ENCODE measurements at regions of chr6 and their contacts with region 1.

Region 1: DNA sequence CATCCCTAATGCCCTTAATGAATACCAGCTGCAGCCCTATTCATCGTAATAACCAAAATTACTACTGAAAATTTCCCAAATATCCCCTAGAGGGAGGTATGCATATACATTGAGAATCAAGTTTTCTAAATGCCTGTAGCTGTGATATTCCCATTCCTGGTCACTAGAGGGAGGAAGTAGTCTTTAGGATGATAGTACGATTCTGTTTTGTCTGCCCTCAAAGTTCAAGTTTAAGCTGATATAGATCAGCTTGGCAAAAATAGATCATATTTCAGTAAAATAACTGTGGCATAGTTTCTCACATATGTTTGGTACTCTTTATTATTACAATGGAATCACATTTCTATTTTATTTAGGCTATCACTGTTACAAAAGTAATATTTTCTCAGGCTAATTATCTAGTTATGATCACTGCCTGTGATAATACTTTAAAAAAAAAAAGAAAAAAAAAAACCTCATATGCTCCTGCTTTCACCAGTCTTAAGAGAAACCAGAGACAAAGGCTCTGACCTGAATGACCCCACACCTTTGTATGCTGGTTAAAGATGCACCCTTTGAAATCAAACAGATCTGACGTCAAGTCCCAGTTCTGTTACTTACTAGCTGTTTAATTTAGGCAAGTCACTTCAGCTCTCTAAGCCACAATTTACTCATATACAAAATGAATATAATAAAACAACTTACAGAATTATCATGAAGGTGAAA is 11.0 kb downstream of the TSPYL1 start:
- DNase-seq: peak; percentile 86
- ATAC-seq: peak; percentile 97
- H3K4me3 ChIP-seq: no peak overlapping the region
- H3K27ac ChIP-seq: no peak overlapping the region
- H3K4me1 ChIP-seq: peaks cover 5% of the 10 kb centered on the region; the same call in 1 of the 2 replicates
- H3K27me3 ChIP-seq: no peaks in the 10 kb centered on the region
- CTCF ChIP-seq: peak; percentile 99
- POLR2A ChIP-seq: no peak
- RAD21 ChIP-seq: peak; percentile 90

Region 2: GRCh38 chr6:115817161-115817560 is 451.6 kb before region 1 on chr6:
- CTCF ChIA-PET with region 1: no interaction called
- POLR2A ChIA-PET with region 1: no interaction called
- dilution Hi-C with region 1: no loop called
- in situ Hi-C with region 1: no loop called
- intact Hi-C with region 1: no loop called
- DNase-seq: no peak
- ATAC-seq: no peak
- H3K4me3 ChIP-seq: no peak overlapping the region
- H3K27ac ChIP-seq: no peak overlapping the region
- H3K4me1 ChIP-seq: no peaks in the 10 kb centered on the region
- H3K27me3 ChIP-seq: no peaks in the 10 kb centered on the region
- CTCF ChIP-seq: no peak
- POLR2A ChIP-seq: no peak
- RAD21 ChIP-seq: no peak

Region 3: DNA sequence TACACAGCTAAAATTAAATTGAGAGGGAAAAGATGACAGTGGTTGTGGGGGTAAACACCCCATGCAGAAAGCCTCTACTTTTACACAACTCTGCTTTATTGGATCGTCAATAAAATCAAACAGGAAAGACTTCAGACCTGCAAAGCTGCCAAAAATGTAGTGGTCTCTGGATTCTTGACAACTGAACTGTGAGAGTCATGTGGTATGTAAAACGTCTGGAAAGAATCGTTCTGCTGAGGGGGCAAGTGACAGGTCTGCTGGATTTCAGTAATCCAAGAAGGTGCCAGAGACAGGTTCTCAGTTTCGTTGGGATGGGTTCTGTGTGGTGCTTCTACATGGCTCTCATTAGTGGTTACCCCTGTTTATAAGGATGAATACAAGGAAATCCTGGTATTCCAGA is 78.2 kb before region 1 on chr6:
- CTCF ChIA-PET with region 1: no interaction called
- POLR2A ChIA-PET with region 1: no interaction called
- dilution Hi-C with region 1: no loop called
- in situ Hi-C with region 1: no loop called
- intact Hi-C with region 1: no loop called
- DNase-seq: peak; percentile 88
- ATAC-seq: peak; percentile 37
- H3K4me3 ChIP-seq: no peak overlapping the region
- H3K27ac ChIP-seq: no peak overlapping the region; the same call in 1 of the 2 replicates
- H3K4me1 ChIP-seq: peaks cover 3% of the 10 kb centered on the region
- H3K27me3 ChIP-seq: no peaks in the 10 kb centered on the region
- CTCF ChIP-seq: no peak
- POLR2A ChIP-seq: no peak
- RAD21 ChIP-seq: no peak

Region 4: DNA sequence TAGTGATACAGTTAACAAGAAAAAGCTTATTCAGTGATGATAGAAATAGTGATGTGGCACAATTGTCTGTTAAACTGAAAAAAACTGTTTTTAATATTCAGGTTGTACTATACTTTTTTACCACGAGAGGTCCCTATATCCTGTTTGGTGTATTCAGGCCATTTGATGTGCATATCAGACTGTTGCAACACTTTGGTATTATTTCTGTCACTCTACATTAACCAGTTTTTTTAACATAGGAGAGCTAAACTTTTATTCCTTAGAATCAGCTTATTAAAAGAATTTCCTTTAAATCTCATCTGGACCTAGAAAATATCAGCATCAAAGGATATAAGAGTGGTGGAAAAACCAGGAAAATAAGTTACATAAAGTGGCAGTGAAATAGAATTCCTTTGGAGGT is 51.7 kb before region 1 on chr6:
- CTCF ChIA-PET with region 1: interaction called, 20 read pairs
- POLR2A ChIA-PET with region 1: no interaction called
- dilution Hi-C with region 1: no loop called
- in situ Hi-C with region 1: no loop called
- intact Hi-C with region 1: loop called (anchors 1 kb)
- DNase-seq: peak; percentile 52
- ATAC-seq: peak; percentile 67
- H3K4me3 ChIP-seq: no peak overlapping the region
- H3K27ac ChIP-seq: no peak overlapping the region
- H3K4me1 ChIP-seq: peaks cover 6% of the 10 kb centered on the region
- H3K27me3 ChIP-seq: no peaks in the 10 kb centered on the region
- CTCF ChIP-seq: peak; percentile 59
- POLR2A ChIP-seq: no peak
- RAD21 ChIP-seq: peak; percentile 54

Region 5: DNA sequence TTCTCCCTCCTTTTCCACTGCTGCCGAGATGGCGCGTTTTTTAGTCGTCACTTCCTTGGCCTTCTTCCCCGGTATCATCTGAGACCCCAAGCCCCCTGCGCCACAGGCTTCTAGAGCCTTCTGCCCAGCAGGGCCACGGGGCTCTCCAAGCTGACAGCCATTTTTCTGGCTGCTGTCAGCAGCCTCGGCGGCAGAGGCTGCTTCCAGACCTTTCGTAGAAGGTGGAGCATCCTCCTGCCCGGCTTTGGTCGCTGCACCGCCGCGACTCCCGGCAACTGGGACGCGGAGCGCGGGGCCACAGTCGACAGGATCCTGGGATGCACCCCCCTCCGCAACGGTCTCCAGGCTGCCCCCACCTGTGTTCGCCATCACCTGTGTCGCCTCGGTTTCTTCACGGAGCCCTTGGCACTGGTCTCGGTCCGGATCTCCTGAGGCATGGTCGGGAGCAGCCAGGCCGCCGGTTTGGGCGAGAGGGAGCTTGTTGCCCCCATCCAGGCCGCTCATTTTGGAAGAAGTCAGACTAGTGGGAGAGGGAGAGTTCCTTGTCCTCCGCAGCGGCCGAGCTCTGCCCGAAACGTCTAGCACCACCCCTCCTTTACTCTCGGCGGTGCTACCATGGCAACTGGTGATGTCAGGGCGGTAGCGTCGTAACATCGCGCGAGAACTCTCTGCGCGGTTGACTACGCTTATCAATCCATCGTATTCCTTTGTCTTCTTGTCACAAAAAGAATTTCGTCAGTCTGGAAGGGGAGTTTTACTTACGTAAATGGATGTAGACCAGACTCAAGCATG is 15.0 kb before region 1 on chr6 and contains the start of gene TSPYL4:
- CTCF ChIA-PET with region 1: interaction called, 12 read pairs
- POLR2A ChIA-PET with region 1: no interaction called
- dilution Hi-C with region 1: no loop called
- in situ Hi-C with region 1: no loop called
- intact Hi-C with region 1: no loop called
- DNase-seq: peak; percentile 97
- ATAC-seq: peak; percentile 91
- H3K4me3 ChIP-seq: peak within 1 kb of the TSS; percentile 90
- H3K27ac ChIP-seq: peak within 1 kb of the TSS; percentile 86
- H3K4me1 ChIP-seq: peaks cover 22% of the 10 kb centered on the region
- H3K27me3 ChIP-seq: no peaks in the 10 kb centered on the region
- CTCF ChIP-seq: no peak
- POLR2A ChIP-seq: peak; percentile 88
- RAD21 ChIP-seq: no peak
- total RNA-seq, gene TSPYL4: 22.0 and 23.1 TPM in 2 replicates

Region 6: GRCh38 chr6:116279260-116280063 is 10.7 kb after region 1 on chr6 and contains the start of gene TSPYL1:
- CTCF ChIA-PET with region 1: interaction called, 20 read pairs
- POLR2A ChIA-PET with region 1: interaction called, 5 read pairs
- dilution Hi-C with region 1: no loop called
- in situ Hi-C with region 1: no loop called
- intact Hi-C with region 1: no loop called
- DNase-seq: peak; percentile 97
- ATAC-seq: peak; percentile 96
- H3K4me3 ChIP-seq: peak within 1 kb of the TSS; percentile 87
- H3K27ac ChIP-seq: peak within 1 kb of the TSS; percentile 93
- H3K4me1 ChIP-seq: peaks cover 6% of the 10 kb centered on the region
- H3K27me3 ChIP-seq: no peaks in the 10 kb centered on the region
- CTCF ChIP-seq: 0 out of 2 replicates have a peak, but pooled peaks have one; percentile 13
- POLR2A ChIP-seq: peak; percentile 94
- RAD21 ChIP-seq: no peak
- total RNA-seq, gene TSPYL1: 111 and 121 TPM in 2 replicates

Region 7: GRCh38 chr6:116556065-116556464 is 287.3 kb after region 1 on chr6:
- CTCF ChIA-PET with region 1: interaction called, 22 read pairs
- POLR2A ChIA-PET with region 1: no interaction called
- dilution Hi-C with region 1: no loop called
- in situ Hi-C with region 1: loop called (anchors 5 kb)
- intact Hi-C with region 1: loop called (anchors 1 kb)
- DNase-seq: peak; percentile 83
- ATAC-seq: peak; percentile 64
- H3K4me3 ChIP-seq: no peak overlapping the region
- H3K27ac ChIP-seq: peak overlapping the region; percentile 83
- H3K4me1 ChIP-seq: peaks cover 7% of the 10 kb centered on the region
- H3K27me3 ChIP-seq: no peaks in the 10 kb centered on the region
- CTCF ChIP-seq: no peak
- POLR2A ChIP-seq: no peak
- RAD21 ChIP-seq: no peak

Region 8: DNA sequence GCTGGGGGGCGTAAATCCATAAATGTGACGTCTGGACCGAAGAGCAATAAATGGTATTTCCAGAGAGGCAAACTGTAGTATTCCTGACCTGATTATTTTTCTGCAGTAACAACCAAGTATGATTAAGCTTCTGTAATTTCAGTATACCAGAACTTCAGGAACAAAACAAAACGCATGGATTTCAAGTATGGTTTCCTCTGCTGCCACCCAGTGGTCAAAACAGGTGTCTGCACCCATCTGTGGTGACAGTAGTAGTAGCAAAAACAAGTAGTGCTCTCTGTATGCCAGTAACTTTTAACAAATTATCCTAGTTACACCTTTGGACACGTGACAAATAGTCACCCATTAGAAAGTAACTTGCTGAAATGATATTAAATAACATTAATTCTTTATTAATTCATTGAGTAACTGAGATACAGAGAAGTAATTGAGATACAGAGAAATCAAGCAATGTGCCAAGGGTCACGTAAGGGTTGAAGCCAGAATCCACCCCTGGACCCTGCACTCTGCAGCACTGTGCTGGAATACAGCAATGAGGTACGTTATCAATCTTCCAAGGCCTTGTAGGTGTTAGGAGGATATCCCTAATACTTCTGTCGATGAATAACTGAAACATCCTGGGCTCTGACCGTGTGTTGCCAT is 292.8 kb after region 1 on chr6:
- CTCF ChIA-PET with region 1: interaction called, 22 read pairs
- POLR2A ChIA-PET with region 1: no interaction called
- dilution Hi-C with region 1: no loop called
- in situ Hi-C with region 1: loop called (anchors 5 kb)
- intact Hi-C with region 1: loop called (anchors 1 kb)
- DNase-seq: peak; percentile 75
- ATAC-seq: peak; percentile 72
- H3K4me3 ChIP-seq: no peak overlapping the region
- H3K27ac ChIP-seq: no peak overlapping the region
- H3K4me1 ChIP-seq: peaks cover 10% of the 10 kb centered on the region
- H3K27me3 ChIP-seq: no peaks in the 10 kb centered on the region
- CTCF ChIP-seq: peak; percentile 89
- POLR2A ChIP-seq: no peak
- RAD21 ChIP-seq: peak; percentile 88

Region 9: DNA sequence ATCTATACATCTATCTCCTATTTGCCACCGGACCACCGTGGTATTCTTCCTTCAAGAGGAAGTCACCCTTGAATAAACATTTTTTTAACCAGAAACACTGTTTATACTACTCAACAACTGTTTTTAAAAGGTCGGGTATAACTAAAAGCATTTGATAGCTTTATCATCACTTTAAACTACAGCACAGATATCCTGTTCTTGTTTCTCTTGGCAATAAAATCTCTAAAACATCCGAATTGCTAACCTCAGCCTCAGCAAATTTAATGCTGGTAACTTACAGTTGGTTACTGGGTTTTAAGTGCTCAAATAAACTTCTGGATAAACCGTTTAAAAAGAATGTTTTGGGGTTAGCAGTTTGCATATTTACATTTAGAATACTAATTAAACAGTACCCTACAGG is 379.4 kb after region 1 on chr6:
- CTCF ChIA-PET with region 1: no interaction called
- POLR2A ChIA-PET with region 1: no interaction called
- dilution Hi-C with region 1: no loop called
- in situ Hi-C with region 1: no loop called
- intact Hi-C with region 1: loop called (anchors 5 kb)
- DNase-seq: peak; percentile 51
- ATAC-seq: peak; percentile 89
- H3K4me3 ChIP-seq: no peak overlapping the region
- H3K27ac ChIP-seq: no peak overlapping the region
- H3K4me1 ChIP-seq: peaks cover 2% of the 10 kb centered on the region
- H3K27me3 ChIP-seq: no peaks in the 10 kb centered on the region
- CTCF ChIP-seq: no peak
- POLR2A ChIP-seq: no peak
- RAD21 ChIP-seq: no peak